OCI-LY7 (cell line): ENCODE measurements at regions of chr9 and their contacts with region 1.

Region 1: DNA sequence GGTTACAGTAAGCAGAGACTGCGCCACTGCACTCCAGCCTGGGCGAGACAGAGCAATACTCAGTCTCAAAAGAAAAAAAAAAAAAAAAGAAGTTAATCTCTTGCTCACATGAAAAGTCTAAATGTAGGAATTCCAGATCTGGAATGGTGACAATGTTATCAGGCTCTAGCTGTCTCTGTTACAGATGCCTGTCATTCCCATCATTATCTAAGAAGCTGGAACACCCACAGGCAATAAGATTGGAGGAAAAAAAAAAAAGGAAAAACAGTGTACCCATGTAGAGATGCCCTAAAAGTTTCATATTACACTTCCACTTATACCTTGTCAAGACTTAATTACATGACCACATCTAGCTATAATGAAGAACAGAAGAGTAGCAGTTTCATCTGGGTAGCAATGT is 38.2 kb downstream of the PTBP3 start:
- DNase-seq: no peak
- H3K4me3 ChIP-seq: no peak overlapping the region
- H3K27ac ChIP-seq: no peak overlapping the region
- H3K4me1 ChIP-seq: no peaks in the 10 kb centered on the region
- CTCF ChIP-seq: no peak

Region 2: DNA sequence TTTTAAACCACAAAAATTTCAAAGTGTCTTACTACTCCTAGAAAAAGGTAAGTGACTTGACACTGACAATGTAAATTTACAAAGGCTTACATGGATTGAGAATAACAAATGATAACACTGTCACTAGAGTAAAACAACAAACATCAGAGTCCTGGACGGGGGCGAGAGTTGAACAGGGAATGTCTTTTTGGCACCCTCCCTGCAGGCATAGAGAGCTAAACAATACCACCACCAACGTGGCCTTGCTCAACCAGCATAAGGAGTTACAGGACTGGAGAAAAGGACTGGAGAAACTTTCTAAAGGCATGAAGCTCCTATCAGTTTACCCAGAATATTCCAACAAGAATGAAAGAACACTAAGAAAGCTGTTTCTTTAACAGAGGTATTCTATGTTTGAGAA is 17.0 kb before region 1 on chr9:
- CTCF ChIA-PET with region 1: no interaction called
- POLR2A ChIA-PET with region 1: interaction called, 10 read pairs
- intact Hi-C with region 1: no loop called
- DNase-seq: no peak
- H3K4me3 ChIP-seq: no peak overlapping the region
- H3K27ac ChIP-seq: no peak overlapping the region
- H3K4me1 ChIP-seq: no peaks in the 10 kb centered on the region
- CTCF ChIP-seq: no peak